Gastrocnemius medialis (tissue), 4 donors: ENCODE measurements at regions of chr19 and their contacts with region 1.

Region 1: GRCh38 chr19:36973021-36973843 is 57.1 kb downstream of the ZNF568 start:
- DNase-seq: peak; percentile 41 to 61
- ATAC-seq: peak; percentile 85 to 92
- H3K4me3 ChIP-seq: peak overlapping the region; percentile 61 to 82 (median 70)
- H3K27ac ChIP-seq: peak overlapping the region; percentile 52 to 82 (median 70)
- H3K4me1 ChIP-seq: peaks cover 3 to 7% of the 10 kb centered on the region in 2 donors
- H3K27me3 ChIP-seq: peaks cover 0 to 5% (median 0%) of the 10 kb centered on the region in 3 donors
- CTCF ChIP-seq: peak; percentile 64 to 85 (median 71)
- POLR2A ChIP-seq: no peak

Region 2: DNA sequence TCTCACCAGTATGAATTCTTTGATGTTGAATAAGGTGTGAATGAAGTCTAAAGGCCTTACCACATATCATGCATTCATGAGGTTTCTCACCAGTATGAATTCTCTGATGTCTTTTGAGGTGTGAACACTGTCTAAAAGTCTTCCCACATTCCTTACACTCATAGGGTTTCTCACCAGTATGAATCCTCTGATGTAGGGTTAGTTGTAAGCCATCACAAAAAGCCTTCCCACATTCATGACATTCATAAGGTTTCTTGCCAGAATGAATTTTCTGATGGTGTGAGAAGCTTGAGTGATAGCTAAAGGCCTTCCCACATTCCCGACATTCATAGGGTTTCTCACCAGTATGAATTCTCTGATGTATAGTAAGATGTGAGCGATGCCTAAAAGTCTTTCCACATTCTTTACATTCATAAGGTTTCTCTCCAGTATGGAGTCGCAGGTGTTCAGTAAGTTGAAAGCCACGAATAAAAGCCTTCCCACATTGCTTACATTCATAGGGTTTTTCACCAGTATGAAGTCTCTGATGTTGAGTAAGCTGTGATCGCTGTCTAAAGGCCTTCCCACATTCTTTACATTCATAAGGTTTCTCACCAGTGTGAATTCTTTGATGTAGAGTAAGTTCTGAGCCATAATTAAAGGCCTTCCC is 334.2 kb before region 1 on chr19:
- in situ Hi-C with region 1: no loop called
- intact Hi-C with region 1: no loop called
- DNase-seq: no peak
- ATAC-seq: no peak
- H3K4me3 ChIP-seq: peak overlapping the region in 1 of 4 donors; percentile 29
- H3K27ac ChIP-seq: no peak overlapping the region
- H3K4me1 ChIP-seq: no peaks in the 10 kb centered on the region
- H3K27me3 ChIP-seq: no peaks in the 10 kb centered on the region
- CTCF ChIP-seq: no peak
- POLR2A ChIP-seq: no peak

Region 3: DNA sequence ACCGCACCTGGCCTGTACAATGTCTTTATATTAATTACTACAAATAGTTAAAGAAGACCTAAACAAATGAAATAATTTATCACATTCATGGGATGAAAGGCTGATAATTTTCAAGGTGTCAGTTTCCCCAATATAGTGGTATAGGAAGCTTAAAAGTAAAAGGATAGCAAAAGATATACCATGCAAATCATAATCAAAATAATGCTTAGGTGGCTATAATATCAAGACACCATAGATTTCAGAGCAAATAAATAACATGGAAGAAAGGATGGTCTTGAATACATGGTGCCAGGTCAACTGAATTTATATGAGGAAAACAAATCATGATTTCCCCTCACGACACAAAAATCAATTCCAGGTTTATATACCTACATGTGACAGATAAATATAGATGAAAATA is 139.8 kb before region 1 on chr19:
- in situ Hi-C with region 1: no loop called
- intact Hi-C with region 1: no loop called
- DNase-seq: no peak
- ATAC-seq: no peak
- H3K4me3 ChIP-seq: no peak overlapping the region
- H3K27ac ChIP-seq: no peak overlapping the region
- H3K4me1 ChIP-seq: peaks cover 4 to 8% of the 10 kb centered on the region in 2 donors
- H3K27me3 ChIP-seq: no peaks in the 10 kb centered on the region
- CTCF ChIP-seq: no peak
- POLR2A ChIP-seq: no peak

Region 4: DNA sequence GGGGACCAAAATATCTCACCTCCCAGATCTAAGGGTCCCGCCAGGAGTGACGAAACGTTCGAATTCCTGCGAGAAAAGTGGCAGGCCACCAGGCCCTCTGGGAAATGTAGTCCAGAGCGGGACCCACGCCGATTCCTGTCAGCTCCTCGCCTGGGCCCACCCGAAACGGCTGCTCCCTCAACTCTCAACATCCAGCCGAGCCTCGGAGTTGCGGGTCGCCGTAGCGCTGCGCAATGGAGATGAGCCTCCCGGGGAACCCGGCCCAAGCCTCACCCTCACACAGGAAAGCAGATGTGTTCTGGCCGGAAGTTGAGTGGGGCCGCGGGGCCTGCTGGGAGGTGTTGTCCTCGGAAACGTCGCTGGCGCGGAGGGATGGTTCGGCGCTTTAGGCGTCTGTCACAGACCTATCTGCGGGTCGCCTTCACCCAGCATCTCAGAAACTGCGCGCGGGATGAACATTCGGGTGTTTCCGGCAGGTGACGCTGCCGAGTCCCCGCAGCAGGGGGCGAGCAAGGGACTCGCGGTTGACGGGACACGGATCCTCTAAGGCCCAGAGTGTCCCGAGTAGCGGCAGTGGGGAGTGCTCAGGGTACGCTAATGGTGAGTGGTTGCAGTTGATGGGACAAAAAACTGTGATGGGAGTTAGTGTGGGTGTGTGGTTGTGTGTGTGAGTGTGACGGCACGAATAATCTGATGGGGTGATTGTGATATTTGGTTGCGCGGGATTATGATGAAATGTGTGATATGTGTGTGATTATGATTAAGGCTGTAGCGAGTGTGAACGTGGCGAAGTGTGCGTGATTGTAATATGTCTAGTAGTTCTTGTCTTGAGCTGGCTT is 57.0 kb before region 1 on chr19 and contains the starts of genes ZNF568 and ZNF829:
- in situ Hi-C with region 1: no loop called
- intact Hi-C with region 1: loop called (anchors 2 kb)
- DNase-seq: peak; percentile 76 to 79
- ATAC-seq: peak; percentile 98
- H3K4me3 ChIP-seq: peak within 1 kb of the TSS; percentile 82 to 98 (median 83)
- H3K27ac ChIP-seq: peak within 1 kb of the TSS; percentile 92 to 97 (median 94)
- H3K4me1 ChIP-seq: peaks cover 8 to 12% of the 10 kb centered on the region in 2 donors
- H3K27me3 ChIP-seq: no peaks in the 10 kb centered on the region
- CTCF ChIP-seq: peak; percentile 32 to 64 (median 46)
- POLR2A ChIP-seq: peak in 1 of 2 donors; percentile 12
- total RNA-seq, gene ZNF568: 3.0 to 10.2 (median 5.4) TPM
- total RNA-seq, gene ZNF829: 0.97 to 1.5 (median 1.2) TPM

Region 5: DNA sequence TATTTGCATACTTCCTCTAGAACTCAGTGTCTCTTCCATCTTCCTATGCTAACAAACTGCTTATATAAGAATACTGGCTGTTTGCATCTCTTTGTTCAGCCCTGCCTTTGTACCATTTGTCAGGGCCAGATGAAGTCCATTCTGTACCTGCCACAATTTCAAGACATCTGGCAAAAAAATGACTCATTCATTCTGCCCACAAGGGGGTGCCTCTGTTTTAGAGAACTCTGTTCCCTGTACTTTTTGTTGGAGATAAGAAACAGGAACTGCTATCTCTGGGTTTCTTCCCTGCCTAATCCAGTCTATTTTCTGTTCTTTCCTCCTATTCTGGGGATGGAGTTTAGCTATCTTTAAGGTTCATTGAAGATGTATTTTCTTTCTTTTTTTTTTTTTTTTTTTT is 34.1 kb before region 1 on chr19:
- in situ Hi-C with region 1: no loop called
- intact Hi-C with region 1: no loop called
- DNase-seq: no peak
- ATAC-seq: no peak
- H3K4me3 ChIP-seq: no peak overlapping the region
- H3K27ac ChIP-seq: no peak overlapping the region
- H3K4me1 ChIP-seq: no peaks in the 10 kb centered on the region
- H3K27me3 ChIP-seq: no peaks in the 10 kb centered on the region
- CTCF ChIP-seq: no peak
- POLR2A ChIP-seq: no peak

Region 6: DNA sequence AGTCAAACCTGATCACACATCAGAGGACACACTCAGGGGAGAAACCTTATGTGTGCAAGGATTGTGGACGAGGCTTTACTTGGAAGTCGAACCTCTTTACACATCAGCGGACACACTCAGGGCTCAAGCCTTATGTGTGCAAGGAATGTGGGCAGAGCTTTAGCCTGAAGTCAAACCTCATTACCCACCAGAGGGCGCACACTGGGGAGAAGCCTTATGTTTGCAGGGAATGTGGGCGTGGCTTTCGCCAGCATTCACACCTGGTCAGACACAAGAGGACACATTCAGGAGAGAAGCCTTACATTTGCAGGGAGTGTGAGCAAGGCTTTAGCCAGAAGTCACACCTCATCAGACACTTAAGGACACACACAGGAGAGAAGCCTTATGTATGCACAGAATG is 389.5 kb after region 1 on chr19:
- in situ Hi-C with region 1: no loop called
- intact Hi-C with region 1: no loop called
- DNase-seq: no peak
- ATAC-seq: no peak
- H3K4me3 ChIP-seq: no peak overlapping the region
- H3K27ac ChIP-seq: peak overlapping the region in 2 of 4 donors; percentile 6 to 25
- H3K4me1 ChIP-seq: no peaks in the 10 kb centered on the region
- H3K27me3 ChIP-seq: no peaks in the 10 kb centered on the region
- CTCF ChIP-seq: no peak
- POLR2A ChIP-seq: no peak